ENCODE measurements at regions of chr11 and their contacts with region 1.

Region 1: DNA sequence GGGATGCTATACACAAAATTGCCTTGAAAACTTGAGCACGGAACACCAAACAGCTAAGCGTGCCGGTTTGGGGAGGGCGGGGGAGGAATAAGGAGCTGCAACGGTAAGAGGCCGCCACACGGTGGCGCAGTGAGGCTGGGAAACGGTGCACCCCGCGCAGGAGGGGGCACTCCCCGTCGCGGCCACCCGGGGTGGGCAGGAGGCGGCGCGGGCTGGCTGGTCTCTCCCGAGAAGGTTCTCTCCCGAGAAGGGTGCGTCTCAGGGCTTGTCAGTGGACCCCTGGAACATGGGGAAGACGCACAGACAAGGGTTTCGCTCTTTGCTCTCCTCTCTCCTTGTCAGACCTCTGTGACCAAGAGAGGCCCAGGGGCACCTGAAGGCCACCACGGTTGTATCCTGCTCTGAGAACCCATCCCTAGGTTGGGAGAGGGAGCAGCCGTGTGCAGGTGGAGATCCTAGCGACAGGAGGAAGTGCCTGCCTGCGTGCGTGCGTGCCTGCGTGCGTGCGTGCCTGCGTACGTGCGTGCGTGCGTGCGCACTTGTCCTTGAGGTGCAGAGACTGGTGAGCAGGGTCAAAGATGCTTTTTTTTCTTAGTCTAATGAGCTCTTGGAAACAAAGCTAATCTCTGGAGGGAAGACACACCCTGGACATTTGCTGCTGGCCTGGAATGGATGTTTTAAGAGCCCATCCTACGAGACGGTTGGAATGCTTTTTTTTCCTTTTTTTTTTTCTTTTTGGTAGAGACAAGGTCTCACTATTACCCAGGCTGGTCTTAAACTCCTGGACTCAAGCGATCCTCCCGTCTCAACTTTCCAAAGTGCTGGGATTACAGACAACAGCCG is 18.1 kb upstream of the JAM3 start:
- DNase-seq: peak; percentile 87
- ATAC-seq: peak; percentile 90
- H3K4me3 Mint-ChIP-seq: no peak overlapping the region
- H3K27ac Mint-ChIP-seq: no peak overlapping the region
- H3K4me1 Mint-ChIP-seq: peaks cover 7% of the 10 kb centered on the region
- H3K27me3 Mint-ChIP-seq: peaks cover 21% of the 10 kb centered on the region

Region 2: GRCh38 chr11:133966921-133967598 is 83.7 kb before region 1 on chr11:
- CTCF ChIA-PET with region 1: interaction called, 3 read pairs
- POLR2A ChIA-PET with region 1: no interaction called
- intact Hi-C with region 1: loop called in 1 of 2 experiments (anchors 2 kb)
- DNase-seq: peak; percentile 88
- ATAC-seq: peak; percentile 90
- H3K4me3 Mint-ChIP-seq: peak overlapping the region; percentile 69
- H3K27ac Mint-ChIP-seq: peak overlapping the region; percentile 87
- H3K4me1 Mint-ChIP-seq: peaks cover 12% of the 10 kb centered on the region
- H3K27me3 Mint-ChIP-seq: peaks cover 10% of the 10 kb centered on the region

Region 3: GRCh38 chr11:134033696-134034491 is 16.9 kb before region 1 on chr11:
- CTCF ChIA-PET with region 1: interaction called, 56 read pairs
- POLR2A ChIA-PET with region 1: interaction called, 6 read pairs
- intact Hi-C with region 1: no loop called
- DNase-seq: peak; percentile 84
- ATAC-seq: peak; percentile 91
- H3K4me3 Mint-ChIP-seq: no peak overlapping the region
- H3K27ac Mint-ChIP-seq: peak overlapping the region; percentile 7
- H3K4me1 Mint-ChIP-seq: peaks cover 54% of the 10 kb centered on the region
- H3K27me3 Mint-ChIP-seq: peaks cover 4% of the 10 kb centered on the region

Region 4: GRCh38 chr11:134062265-134063123 is 11.7 kb after region 1 on chr11:
- CTCF ChIA-PET with region 1: interaction called, 19 read pairs
- POLR2A ChIA-PET with region 1: no interaction called
- intact Hi-C with region 1: no loop called
- DNase-seq: peak; percentile 52
- ATAC-seq: peak; percentile 55
- H3K4me3 Mint-ChIP-seq: no peak overlapping the region
- H3K27ac Mint-ChIP-seq: no peak overlapping the region
- H3K4me1 Mint-ChIP-seq: peaks cover 10% of the 10 kb centered on the region
- H3K27me3 Mint-ChIP-seq: peaks cover 31% of the 10 kb centered on the region

Region 5: DNA sequence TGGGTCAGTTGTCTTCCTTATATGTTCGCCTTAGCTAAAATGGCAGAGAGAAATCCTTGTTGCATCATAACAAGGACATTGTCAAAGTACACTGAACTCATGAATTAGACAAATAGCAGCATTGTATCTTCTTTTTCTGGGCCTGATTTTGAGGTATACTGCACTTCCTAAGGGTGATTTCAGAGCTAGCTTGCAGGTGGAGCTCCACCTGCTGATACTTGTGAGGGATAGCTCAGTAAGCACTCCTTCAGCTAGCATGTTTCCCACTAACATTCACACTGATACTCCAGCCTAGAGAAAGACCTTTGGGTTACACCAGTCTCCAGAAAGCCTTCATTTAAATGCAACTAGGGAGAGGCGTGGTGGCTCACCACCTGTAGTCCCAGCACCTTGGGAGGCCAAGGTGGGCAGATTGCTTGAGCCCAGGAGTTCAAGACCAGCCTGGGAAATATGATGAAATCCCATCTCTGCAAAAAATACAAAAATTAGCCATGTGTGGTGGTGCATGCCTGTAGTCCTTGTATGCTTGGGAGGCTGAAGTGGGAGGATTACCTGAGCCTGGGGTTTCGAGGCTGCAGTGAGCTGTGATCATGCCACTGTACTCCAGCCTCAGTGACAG is 47.9 kb after region 1 on chr11:
- CTCF ChIA-PET with region 1: interaction called, 18 read pairs
- POLR2A ChIA-PET with region 1: no interaction called
- intact Hi-C with region 1: loop called (anchors 1 kb)
- DNase-seq: no peak
- ATAC-seq: peak; percentile 73
- H3K4me3 Mint-ChIP-seq: no peak overlapping the region
- H3K27ac Mint-ChIP-seq: no peak overlapping the region
- H3K4me1 Mint-ChIP-seq: no peaks in the 10 kb centered on the region
- H3K27me3 Mint-ChIP-seq: no peaks in the 10 kb centered on the region

Region 6: DNA sequence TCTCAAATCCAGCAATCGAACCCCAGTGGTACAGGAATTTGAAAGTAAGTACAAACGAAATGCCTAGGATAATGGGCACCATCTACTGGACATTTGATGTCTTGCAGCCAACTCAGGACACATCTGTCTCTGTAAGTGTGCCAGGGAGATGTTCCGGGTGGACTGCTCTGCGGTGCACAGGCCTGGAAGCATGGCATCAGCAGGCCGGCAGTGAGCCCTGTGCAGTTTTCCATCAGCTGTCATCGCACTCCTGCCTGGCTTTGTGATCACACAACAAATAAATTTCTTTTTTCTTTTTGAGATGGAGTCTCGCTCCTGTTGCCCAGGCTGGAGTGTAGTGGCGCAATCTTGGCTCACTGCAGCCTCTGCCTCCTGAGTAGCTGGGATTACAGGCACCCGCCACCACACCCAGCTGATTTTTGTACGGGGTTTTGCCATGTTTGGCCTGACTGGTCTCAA is 89.1 kb after region 1 on chr11:
- CTCF ChIA-PET with region 1: interaction called, 26 read pairs
- POLR2A ChIA-PET with region 1: no interaction called
- intact Hi-C with region 1: loop called (anchors 1 kb)
- DNase-seq: peak; percentile 67
- ATAC-seq: peak; percentile 87
- H3K4me3 Mint-ChIP-seq: no peak overlapping the region
- H3K27ac Mint-ChIP-seq: no peak overlapping the region
- H3K4me1 Mint-ChIP-seq: peaks cover 15% of the 10 kb centered on the region
- H3K27me3 Mint-ChIP-seq: no peaks in the 10 kb centered on the region

Region 7: DNA sequence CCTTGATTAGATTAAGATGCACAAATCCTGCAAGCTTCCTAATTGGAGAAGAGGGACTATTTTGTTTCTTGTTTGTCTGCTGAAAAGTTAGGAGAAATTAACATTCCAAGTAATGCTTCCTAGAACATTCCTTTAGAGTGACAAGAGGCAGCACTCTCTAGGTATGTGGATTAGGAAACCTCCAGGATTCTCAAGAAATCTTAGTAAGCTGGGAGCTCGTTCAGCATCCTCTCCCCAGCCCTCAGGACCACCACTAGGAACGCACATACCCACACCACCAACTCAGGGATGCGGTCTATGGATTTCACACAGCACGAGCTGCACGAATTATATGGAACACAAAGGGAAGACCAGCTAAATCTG is 120.1 kb after region 1 on chr11:
- CTCF ChIA-PET with region 1: no interaction called
- POLR2A ChIA-PET with region 1: no interaction called
- intact Hi-C with region 1: no loop called
- DNase-seq: no peak
- ATAC-seq: no peak
- H3K4me3 Mint-ChIP-seq: no peak overlapping the region
- H3K27ac Mint-ChIP-seq: no peak overlapping the region
- H3K4me1 Mint-ChIP-seq: no peaks in the 10 kb centered on the region
- H3K27me3 Mint-ChIP-seq: no peaks in the 10 kb centered on the region

Region 8: GRCh38 chr11:134207538-134208239 is 156.9 kb after region 1 on chr11:
- CTCF ChIA-PET with region 1: no interaction called
- POLR2A ChIA-PET with region 1: no interaction called
- intact Hi-C with region 1: loop called in 1 of 2 experiments (anchors 5 kb)
- DNase-seq: peak; percentile 81
- ATAC-seq: peak; percentile 33
- H3K4me3 Mint-ChIP-seq: no peak overlapping the region
- H3K27ac Mint-ChIP-seq: no peak overlapping the region
- H3K4me1 Mint-ChIP-seq: peaks cover 5% of the 10 kb centered on the region
- H3K27me3 Mint-ChIP-seq: no peaks in the 10 kb centered on the region

Measured in activated CD4-positive, alpha-beta T cell treated with anti-CD3 and anti-CD28 coated beads for 36 hours (primary cell).